IMR-90 (cell line): ENCODE measurements at regions of chr11 and their contacts with region 1.

Region 1: GRCh38 chr11:77820563-77821348 is at the starts of genes AAMDC and RSF1:
- DNase-seq: peak; percentile 99
- ATAC-seq: peak; percentile 89
- H3K4me3 ChIP-seq: peak within 1 kb of the TSS; percentile 94
- H3K27ac ChIP-seq: peak within 1 kb of the TSS; percentile 89
- H3K4me1 ChIP-seq: peaks cover 3% of the 10 kb centered on the region
- H3K27me3 ChIP-seq: no peaks in the 10 kb centered on the region
- CTCF ChIP-seq: peak; percentile 88
- POLR2A ChIP-seq: peak; percentile 72
- RAD21 ChIP-seq: peak; percentile 71
- total RNA-seq, gene AAMDC: 15.8 and 49.7 TPM in 2 replicates
- total RNA-seq, gene RSF1: 18.5 and 26.7 TPM in 2 replicates

Region 2: DNA sequence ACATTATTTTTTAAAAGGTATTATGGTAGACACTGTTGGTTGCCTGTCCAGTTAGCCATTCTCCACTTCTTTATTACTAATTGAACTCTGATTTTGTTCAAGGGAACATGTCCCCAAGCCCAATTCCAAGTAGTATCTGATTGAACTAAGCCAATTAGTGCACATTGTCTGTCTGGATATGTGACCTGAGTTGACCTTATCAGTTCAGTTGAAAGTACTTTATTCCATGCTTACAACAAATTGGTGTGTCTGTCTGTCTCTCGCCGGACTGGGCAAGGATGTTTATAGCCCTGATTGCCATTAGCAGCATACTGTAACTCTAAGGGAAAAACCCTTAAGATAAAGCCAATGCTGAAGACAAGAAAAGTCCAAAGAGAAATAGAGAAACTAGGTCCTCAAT is 88.1 kb after region 1 on chr11:
- CTCF ChIA-PET with region 1: no interaction called
- POLR2A ChIA-PET with region 1: no interaction called
- dilution Hi-C with region 1: no loop called
- in situ Hi-C with region 1: no loop called
- intact Hi-C with region 1: loop called (anchors 1 kb)
- DNase-seq: no peak
- ATAC-seq: no peak
- H3K4me3 ChIP-seq: no peak overlapping the region
- H3K27ac ChIP-seq: no peak overlapping the region
- H3K4me1 ChIP-seq: peaks cover 5% of the 10 kb centered on the region
- H3K27me3 ChIP-seq: no peaks in the 10 kb centered on the region
- CTCF ChIP-seq: no peak
- POLR2A ChIP-seq: no peak
- RAD21 ChIP-seq: no peak

Region 3: DNA sequence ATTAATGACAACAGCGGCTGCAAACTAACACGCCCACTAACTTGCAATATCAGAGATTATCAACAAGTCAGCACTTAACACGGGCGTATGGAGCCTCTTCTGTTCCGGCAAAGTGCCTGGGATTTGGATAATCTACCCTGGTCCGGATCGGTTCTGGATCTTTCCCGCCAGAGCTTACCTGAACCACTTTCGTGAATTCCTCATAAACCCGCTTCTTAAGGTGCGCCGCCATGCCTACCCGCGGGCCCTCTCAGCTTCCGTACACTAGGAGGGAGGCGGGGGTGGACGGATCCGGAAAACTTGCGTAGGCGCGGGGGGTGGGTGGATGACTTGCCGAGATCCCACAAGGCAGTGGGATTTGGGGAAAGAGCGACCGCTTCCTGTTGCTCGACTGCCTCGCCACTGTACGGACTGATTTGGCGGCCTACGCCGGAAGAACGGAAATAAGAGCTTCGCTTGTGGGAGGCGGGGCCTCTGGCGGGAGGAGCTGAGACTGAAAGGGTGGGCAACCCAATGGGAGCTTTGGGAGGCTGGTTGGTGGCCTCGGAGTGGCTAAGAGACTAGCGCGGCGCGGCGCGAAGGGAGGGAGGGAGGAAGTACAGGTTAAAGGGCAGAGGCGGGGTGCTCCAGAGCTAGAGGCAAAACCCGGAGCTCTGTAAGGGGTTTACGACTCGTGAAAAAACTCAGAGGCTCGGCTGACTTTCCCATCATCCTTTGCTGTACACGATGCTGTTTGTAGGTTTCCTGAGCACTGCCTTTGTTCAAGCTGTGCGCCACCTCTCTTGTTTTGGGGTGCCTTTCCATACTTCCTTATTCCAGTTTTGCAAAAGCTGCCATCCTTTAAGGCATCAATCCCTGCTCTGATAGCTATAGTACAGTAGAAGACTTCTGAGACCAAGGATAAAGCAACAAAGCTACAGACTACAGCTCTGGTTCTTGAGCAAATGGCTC is 173.9 kb after region 1 on chr11 and contains the start of gene INTS4:
- CTCF ChIA-PET with region 1: no interaction called
- POLR2A ChIA-PET with region 1: interaction called, 3 read pairs
- dilution Hi-C with region 1: no loop called
- in situ Hi-C with region 1: no loop called
- intact Hi-C with region 1: loop called (anchors 1 kb)
- DNase-seq: peak; percentile 100
- ATAC-seq: peak; percentile 100
- H3K4me3 ChIP-seq: peak within 1 kb of the TSS; percentile 66
- H3K27ac ChIP-seq: peak within 1 kb of the TSS; percentile 74
- H3K4me1 ChIP-seq: peaks cover 2% of the 10 kb centered on the region; the same call in 1 of the 2 replicates
- H3K27me3 ChIP-seq: no peaks in the 10 kb centered on the region
- CTCF ChIP-seq: no peak
- POLR2A ChIP-seq: peak; percentile 66
- RAD21 ChIP-seq: no peak; the same call in 1 of the 2 replicates
- total RNA-seq, gene INTS4: 44.4 and 52.5 TPM in 2 replicates

Region 4: DNA sequence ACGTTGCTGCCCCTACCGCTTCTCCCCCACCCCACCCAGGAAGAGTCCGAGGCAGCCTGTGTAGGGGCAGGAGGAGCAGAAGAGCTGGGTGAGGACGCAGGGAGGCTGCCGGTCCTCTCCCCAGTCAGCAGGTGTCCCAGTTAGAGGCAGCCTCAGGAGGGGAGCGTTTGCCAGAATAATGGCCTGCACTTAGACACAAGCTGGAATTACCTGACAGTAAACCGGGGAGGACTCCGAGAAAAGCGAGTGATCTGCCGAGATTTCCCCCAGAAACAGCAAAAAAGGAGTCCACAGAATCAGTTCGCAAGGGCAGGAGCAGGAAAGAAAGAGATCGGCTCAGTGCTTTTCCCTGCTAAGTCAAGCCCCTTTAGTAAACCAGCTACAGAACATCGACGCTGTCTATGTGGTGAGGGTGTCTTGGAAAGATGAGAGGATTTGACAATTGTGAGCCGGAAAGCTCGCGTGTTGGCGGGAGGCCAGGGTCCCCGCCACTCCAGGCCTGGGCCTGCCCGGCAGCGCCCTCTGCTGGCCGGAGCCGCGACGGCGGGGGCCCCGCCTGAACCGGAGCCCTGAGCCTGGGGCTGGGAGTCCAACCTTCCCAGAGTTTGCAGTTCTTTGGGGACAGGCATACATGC is 225.2 kb after region 1 on chr11:
- CTCF ChIA-PET with region 1: no interaction called
- POLR2A ChIA-PET with region 1: no interaction called
- dilution Hi-C with region 1: no loop called
- in situ Hi-C with region 1: no loop called
- intact Hi-C with region 1: loop called (anchors 2 kb)
- DNase-seq: peak; percentile 59
- ATAC-seq: peak; percentile 93
- H3K4me3 ChIP-seq: peak overlapping the region; percentile 41
- H3K27ac ChIP-seq: peak overlapping the region; percentile 29
- H3K4me1 ChIP-seq: peaks cover 23% of the 10 kb centered on the region
- H3K27me3 ChIP-seq: no peaks in the 10 kb centered on the region
- CTCF ChIP-seq: peak; percentile 95
- POLR2A ChIP-seq: no peak
- RAD21 ChIP-seq: peak; percentile 92

Region 5: GRCh38 chr11:78131956-78132355 is 311.2 kb after region 1 on chr11:
- CTCF ChIA-PET with region 1: no interaction called
- POLR2A ChIA-PET with region 1: no interaction called
- dilution Hi-C with region 1: no loop called
- in situ Hi-C with region 1: no loop called
- intact Hi-C with region 1: no loop called
- DNase-seq: peak; percentile 75
- ATAC-seq: peak; percentile 75
- H3K4me3 ChIP-seq: no peak overlapping the region
- H3K27ac ChIP-seq: no peak overlapping the region
- H3K4me1 ChIP-seq: no peaks in the 10 kb centered on the region; the same call in 1 of the 2 replicates
- H3K27me3 ChIP-seq: no peaks in the 10 kb centered on the region
- CTCF ChIP-seq: no peak
- POLR2A ChIP-seq: no peak
- RAD21 ChIP-seq: no peak

Region 6: DNA sequence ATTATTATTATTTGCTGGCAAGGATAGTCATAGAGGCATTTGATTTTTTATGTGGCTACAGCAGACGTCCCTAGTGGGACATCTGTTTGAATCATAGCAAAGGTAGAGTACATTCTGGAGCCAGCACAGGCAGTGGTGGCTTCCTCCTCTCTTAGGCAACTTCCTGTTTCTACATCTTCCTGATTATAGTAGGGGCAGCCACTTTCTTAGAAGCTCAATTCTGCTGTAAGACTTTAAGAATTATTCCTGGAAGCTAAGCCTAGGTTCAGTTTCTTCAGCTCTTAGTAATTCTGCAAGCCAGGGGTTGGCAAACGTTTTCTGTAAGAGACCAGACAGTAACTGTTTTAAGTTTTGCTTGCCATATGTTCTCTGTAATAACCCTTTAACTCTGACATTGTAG is 1749.3 kb after region 1 on chr11:
- CTCF ChIA-PET with region 1: no interaction called
- POLR2A ChIA-PET with region 1: no interaction called
- dilution Hi-C with region 1: no loop called
- in situ Hi-C with region 1: no loop called
- intact Hi-C with region 1: no loop called
- DNase-seq: no peak
- ATAC-seq: no peak
- H3K4me3 ChIP-seq: no peak overlapping the region
- H3K27ac ChIP-seq: no peak overlapping the region
- H3K4me1 ChIP-seq: no peaks in the 10 kb centered on the region
- H3K27me3 ChIP-seq: no peaks in the 10 kb centered on the region
- CTCF ChIP-seq: no peak
- POLR2A ChIP-seq: no peak
- RAD21 ChIP-seq: no peak